Pancreas (tissue), 10 donors: ENCODE measurements at regions of chr2 and their contacts with region 1.

Region 1: DNA sequence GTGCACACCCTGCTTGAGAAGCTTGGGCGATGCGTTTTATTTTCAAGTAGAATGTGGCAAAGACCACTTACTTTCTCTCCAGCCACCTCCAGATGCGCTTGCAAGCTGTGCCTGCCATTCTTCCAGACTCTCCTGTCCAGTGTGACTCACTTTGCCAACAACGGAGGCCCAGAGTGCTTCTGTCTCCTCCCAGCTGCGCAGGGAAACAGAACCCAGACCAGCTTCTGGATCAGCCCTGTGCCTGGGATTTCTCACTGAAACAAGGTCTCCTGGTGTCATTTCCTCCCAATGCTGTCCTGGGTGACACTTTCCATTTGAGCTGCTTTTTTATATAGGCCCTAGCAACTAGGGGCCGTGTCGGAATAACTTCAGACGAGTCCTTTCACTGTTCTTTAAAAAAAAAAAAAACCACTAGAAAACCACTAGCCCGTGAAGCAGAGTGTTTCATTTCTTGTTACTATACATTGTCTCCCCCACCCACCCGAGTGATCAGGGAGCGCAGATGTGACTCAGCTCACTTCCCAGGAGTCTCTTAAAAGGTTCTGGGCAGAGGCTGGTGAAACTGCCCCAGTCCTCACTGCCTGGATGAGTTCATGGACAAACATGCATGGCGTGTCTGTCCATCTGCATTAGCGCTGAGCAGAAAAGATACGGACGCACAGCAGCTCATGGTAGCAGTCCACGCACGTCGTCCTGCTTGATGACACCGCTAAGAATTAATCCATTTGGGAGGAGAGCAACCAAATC is 25.3 kb upstream of the RPL31 start:
- DNase-seq: no peak
- ATAC-seq: no peak
- H3K4me3 ChIP-seq: no peak overlapping the region
- H3K27ac ChIP-seq: no peak overlapping the region
- H3K4me1 ChIP-seq: no peaks in the 10 kb centered on the region
- H3K27me3 ChIP-seq: no peaks in the 10 kb centered on the region
- CTCF ChIP-seq: no peak

Region 2: GRCh38 chr2:100610381-100610831 is 366.4 kb before region 1 on chr2:
- intact Hi-C with region 1: loop called (anchors 5 to 10 kb)
- DNase-seq: peak; percentile 21 to 86 (median 62)
- ATAC-seq: peak; percentile 76 to 92 (median 85)
- H3K4me3 ChIP-seq: no peak overlapping the region
- H3K27ac ChIP-seq: no peak overlapping the region
- H3K4me1 ChIP-seq: no peaks in the 10 kb centered on the region
- H3K27me3 ChIP-seq: no peaks in the 10 kb centered on the region
- CTCF ChIP-seq: peak; percentile 9 to 45 (median 34)

Region 3: GRCh38 chr2:100870652-100871531 is 105.9 kb before region 1 on chr2:
- intact Hi-C with region 1: no loop called
- DNase-seq: no peak
- ATAC-seq: no peak
- H3K4me3 ChIP-seq: no peak overlapping the region
- H3K27ac ChIP-seq: no peak overlapping the region
- H3K4me1 ChIP-seq: peaks cover 4 to 5% (median 4%) of the 10 kb centered on the region in 3 donors
- H3K27me3 ChIP-seq: no peaks in the 10 kb centered on the region
- CTCF ChIP-seq: no peak